ENCODE measurements at regions of chr15 and their contacts with region 1.

Region 1: GRCh38 chr15:101127506-101128076 is 124.3 kb downstream of the CHSY1 start:
- DNase-seq: peak; percentile 76 to 94 (median 94)
- H3K4me3 ChIP-seq: peak overlapping the region in 3 of 7 experiments; percentile 22 to 40 (median 31)
- H3K27ac ChIP-seq: peak overlapping the region; percentile 51 to 81
- H3K4me1 ChIP-seq: peaks cover 32 to 77% (median 67%) of the 10 kb centered on the region in 4 experiments
- H3K27me3 ChIP-seq: no peaks in the 10 kb centered on the region

Region 2: GRCh38 chr15:101138913-101139880 is 11.6 kb after region 1 on chr15:
- CTCF ChIA-PET with region 1: interaction called, 15 read pairs
- POLR2A ChIA-PET with region 1: interaction called, 4 read pairs
- DNase-seq: peak in 2 of 3 donors; percentile 53 to 62
- H3K4me3 ChIP-seq: no peak overlapping the region
- H3K27ac ChIP-seq: no peak overlapping the region
- H3K4me1 ChIP-seq: peaks cover 0 to 60% (median 47%) of the 10 kb centered on the region in 4 experiments
- H3K27me3 ChIP-seq: no peaks in the 10 kb centered on the region

Region 3: DNA sequence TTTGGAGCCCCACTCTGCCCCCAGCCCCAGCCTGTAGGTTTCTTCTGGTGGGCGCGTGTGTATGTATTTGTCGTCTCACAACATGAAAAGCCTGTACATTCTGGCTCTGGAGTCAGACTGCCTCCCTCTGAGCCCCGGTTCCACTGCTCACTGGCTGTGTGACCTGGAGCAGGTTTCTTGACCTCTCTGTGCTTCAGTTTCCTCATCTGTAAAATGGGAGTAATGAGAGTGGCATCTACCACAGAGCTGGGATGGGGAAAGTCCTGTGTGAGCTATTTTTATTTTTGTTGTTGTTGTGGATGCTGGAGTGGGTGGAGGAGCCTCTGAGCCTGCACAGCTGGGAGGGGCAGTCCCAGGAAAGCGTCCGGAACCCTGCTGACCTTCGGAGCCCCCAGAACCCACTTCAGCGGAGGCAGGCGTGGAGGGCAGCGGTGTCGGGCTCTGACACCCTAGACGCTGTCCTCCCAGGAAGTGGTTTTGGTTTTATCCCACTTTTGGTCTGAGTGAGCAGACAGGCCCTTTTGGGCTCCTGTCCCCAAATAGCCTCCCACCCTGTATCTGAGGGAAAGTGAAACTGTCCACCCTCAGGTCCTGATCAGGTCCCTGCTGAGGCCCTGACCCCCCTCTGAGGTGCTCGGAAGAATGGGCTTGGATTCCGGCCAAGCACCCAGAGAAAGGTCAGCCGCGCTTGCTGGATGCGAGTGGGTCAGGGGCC is 20.7 kb after region 1 on chr15:
- CTCF ChIA-PET with region 1: interaction called, 11 read pairs
- POLR2A ChIA-PET with region 1: no interaction called
- DNase-seq: peak in 1 of 3 donors; percentile 49
- H3K4me3 ChIP-seq: no peak overlapping the region
- H3K27ac ChIP-seq: peak overlapping the region in 1 of 2 experiments; percentile 72
- H3K4me1 ChIP-seq: peaks cover 5 to 47% (median 40%) of the 10 kb centered on the region in 4 experiments
- H3K27me3 ChIP-seq: no peaks in the 10 kb centered on the region

Measured in common myeloid progenitor, CD34-positive (primary cell).